Vagina (tissue), 2 donors: ENCODE measurements at regions of chr7 and their contacts with region 1.

Region 1: GRCh38 chr7:134782121-134782623 is 2.7 kb downstream of the CALD1 start:
- DNase-seq: no peak
- H3K4me3 ChIP-seq: peak overlapping the region; percentile 62 to 63
- H3K27ac ChIP-seq: peak overlapping the region; percentile 92
- H3K4me1 ChIP-seq: peaks cover 59% of the 10 kb centered on the region
- H3K27me3 ChIP-seq: no peaks in the 10 kb centered on the region
- CTCF ChIP-seq: no peak
- POLR2A ChIP-seq: no peak

Region 2: DNA sequence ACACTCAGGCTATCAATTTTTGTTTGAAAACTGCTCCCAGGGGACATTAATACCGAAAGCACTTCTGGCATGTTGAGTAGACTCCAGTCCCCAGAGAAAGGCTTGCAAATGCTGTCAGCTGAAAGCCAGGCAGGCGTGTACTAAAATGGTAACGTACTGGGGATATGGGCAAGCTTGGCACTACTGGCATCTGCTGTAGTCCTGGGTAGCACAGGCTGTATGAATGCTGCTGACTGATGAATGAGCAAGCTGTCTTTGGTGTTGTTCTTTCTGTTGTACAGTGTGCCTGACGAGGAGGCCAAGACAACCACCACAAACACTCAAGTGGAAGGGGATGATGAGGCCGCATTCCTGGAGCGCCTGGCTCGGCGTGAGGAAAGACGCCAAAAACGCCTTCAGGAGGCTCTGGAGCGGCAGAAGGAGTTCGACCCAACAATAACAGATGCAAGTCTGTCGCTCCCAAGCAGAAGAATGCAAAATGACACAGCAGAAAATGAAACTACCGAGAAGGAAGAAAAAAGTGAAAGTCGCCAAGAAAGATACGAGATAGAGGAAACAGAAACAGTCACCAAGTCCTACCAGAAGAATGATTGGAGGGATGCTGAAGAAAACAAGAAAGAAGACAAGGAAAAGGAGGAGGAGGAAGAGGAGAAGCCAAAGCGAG is 150.7 kb after region 1 on chr7:
- intact Hi-C with region 1: loop called (anchors 10 kb)
- DNase-seq: no peak
- H3K4me3 ChIP-seq: no peak overlapping the region
- H3K27ac ChIP-seq: no peak overlapping the region
- H3K4me1 ChIP-seq: peaks cover 21% of the 10 kb centered on the region
- H3K27me3 ChIP-seq: no peaks in the 10 kb centered on the region
- CTCF ChIP-seq: no peak
- POLR2A ChIP-seq: no peak